GM12878 (cell line): ENCODE measurements at regions of chr18 and their contacts with region 1.

Region 1: DNA sequence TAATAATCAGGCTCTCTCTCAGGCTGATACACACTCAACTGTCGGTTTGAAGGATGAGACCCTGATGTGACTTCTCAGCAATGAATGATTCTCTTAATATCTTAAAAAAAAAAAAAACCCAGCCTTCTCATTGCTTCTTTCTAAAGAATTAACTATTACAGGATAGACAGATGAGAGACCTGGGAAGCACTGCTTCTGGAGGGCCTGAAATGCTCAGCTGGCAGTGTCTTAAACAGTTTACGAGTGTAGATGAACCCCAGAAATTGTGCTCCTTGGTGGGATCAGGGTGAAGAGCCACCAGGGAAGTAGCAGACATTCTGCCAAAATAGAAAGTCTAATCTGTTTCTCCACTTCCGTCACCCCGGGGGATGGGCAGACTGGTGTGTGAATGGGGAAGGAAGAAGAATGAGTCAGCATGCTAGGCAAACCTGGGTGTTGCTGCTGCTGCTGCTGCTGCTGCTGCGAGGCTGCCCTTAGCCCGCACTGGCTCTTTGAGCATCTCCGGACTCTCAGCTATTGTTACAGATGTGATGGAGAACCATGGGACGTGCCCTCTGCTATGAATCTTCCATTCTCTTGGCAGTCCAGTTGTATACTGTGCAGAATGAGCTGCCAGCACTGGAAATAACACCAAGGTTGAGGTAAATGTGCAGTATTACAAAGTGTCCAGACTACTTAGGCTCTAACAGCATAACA is 158.4 kb downstream of the SETBP1 start:
- DNase-seq: peak; percentile 64
- ATAC-seq: peak; percentile 96
- H3K4me3 ChIP-seq: peak overlapping the region; percentile 18; the same call in 1 of the 2 replicates
- H3K27ac ChIP-seq: peak overlapping the region; percentile 40
- H3K4me1 ChIP-seq: peaks cover 23% of the 10 kb centered on the region
- H3K27me3 ChIP-seq: no peaks in the 10 kb centered on the region
- CTCF ChIP-seq: no peak
- EP300 ChIP-seq: 0 out of 4 replicates have a peak, but pooled peaks of 1 of the 2 experiments have one; percentile 44
- POLR2A ChIP-seq: no peak
- RAD21 ChIP-seq: no peak

Region 2: DNA sequence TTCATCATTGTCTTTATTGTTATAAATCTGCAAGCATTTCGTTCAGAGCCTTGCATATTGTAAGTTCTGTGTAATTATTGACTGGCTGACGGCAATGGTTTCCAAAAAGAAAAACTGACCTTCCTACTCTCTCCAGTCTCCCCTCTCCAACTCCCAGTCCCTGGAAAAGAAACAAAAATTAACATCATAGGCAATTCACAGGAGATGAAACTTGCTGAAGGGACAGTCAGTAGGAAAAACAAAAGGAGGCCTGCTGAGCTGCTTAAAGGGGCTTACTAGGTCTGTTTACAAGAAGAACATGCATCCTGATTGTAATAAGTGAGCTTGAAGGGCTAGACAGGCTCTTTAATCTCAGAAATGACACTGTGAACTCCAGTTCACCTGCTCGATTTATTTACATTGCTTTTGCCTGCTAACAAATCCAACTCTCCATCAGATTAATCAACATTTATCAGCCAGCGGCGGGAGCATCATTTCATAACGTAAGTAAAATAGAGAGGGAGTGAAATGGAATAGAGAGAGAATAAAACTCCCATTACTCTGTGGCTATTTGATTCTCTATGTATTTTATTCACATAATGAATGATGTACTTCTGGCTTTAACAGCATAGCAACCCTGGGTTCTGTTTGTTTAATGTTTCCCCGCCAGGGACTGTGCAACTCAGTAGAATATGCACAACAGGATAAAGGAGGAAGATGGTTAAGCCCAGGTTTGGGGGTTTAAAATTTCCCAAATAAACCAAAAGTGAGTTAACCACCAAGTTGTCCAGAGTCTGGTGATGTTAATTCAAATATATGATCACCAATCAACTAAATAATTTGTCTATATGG is 415.1 kb before region 1 on chr18:
- CTCF ChIA-PET with region 1: no interaction called
- POLR2A ChIA-PET with region 1: no interaction called
- RAD21 ChIA-PET with region 1: no interaction called
- SMC1A ChIA-PET with region 1: no interaction called
- in situ Hi-C with region 1: no loop called
- intact Hi-C with region 1: no loop called
- DNase-seq: no peak
- ATAC-seq: no peak
- H3K4me3 ChIP-seq: no peak overlapping the region
- H3K27ac ChIP-seq: no peak overlapping the region
- H3K4me1 ChIP-seq: no peaks in the 10 kb centered on the region
- H3K27me3 ChIP-seq: no peaks in the 10 kb centered on the region
- CTCF ChIP-seq: no peak
- EP300 ChIP-seq: no peak
- POLR2A ChIP-seq: no peak
- RAD21 ChIP-seq: no peak

Region 3: GRCh38 chr18:44786688-44787087 is 52.4 kb before region 1 on chr18:
- CTCF ChIA-PET with region 1: no interaction called
- POLR2A ChIA-PET with region 1: no interaction called
- RAD21 ChIA-PET with region 1: interaction called, 3 read pairs
- SMC1A ChIA-PET with region 1: interaction called, 3 read pairs
- in situ Hi-C with region 1: no loop called
- intact Hi-C with region 1: loop called (anchors 5 kb)
- DNase-seq: no peak
- ATAC-seq: peak; percentile 85
- H3K4me3 ChIP-seq: peak overlapping the region; percentile 41; the same call in 1 of the 2 replicates
- H3K27ac ChIP-seq: peak overlapping the region; percentile 64
- H3K4me1 ChIP-seq: peaks cover 20% of the 10 kb centered on the region
- H3K27me3 ChIP-seq: no peaks in the 10 kb centered on the region
- CTCF ChIP-seq: no peak
- EP300 ChIP-seq: no peak
- POLR2A ChIP-seq: no peak
- RAD21 ChIP-seq: no peak

Region 4: DNA sequence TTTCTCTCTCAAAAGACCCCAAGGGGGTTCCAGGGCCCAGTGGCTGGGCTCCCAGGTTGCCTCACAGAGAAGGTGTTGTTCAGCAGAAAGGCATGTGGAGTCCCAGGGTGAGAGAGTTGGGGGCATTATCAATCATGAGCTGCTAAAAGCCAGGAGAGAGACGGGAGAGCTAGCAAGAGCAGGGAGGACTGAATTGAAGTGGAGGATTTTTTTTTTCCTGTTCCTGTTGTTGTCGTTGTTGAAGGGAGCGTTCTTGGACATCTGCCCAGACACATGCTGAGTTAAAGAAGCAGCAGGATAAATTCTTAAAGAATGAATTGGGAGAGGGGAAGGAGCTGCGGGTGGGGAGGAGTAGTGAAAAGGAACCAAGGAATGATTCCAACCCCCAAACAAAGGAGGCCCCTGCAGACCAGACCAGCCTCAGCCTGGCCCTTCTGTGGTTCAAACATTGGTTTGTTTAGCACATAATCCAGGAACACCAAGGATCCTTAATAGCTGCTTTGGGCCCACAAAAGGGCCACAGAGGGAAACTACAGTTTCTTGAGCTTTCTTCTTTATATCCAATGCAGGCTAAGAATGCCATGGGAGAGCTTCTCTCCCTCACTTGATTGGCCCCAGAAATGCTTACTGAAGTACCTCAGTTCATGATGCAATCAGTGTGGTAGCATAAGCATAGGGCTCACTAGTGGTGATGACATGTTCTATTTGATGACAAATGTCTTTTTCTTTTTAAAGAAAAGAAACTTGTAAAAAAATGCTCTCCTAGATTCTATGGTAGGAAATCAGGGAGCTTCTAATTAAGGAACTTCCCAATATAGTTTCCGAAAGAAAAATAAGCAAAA is 12.5 kb before region 1 on chr18:
- CTCF ChIA-PET with region 1: interaction called, 6 read pairs
- POLR2A ChIA-PET with region 1: interaction called, 3 read pairs
- RAD21 ChIA-PET with region 1: interaction called, 3 read pairs
- SMC1A ChIA-PET with region 1: interaction called, 33 read pairs
- in situ Hi-C with region 1: no loop called
- intact Hi-C with region 1: no loop called
- DNase-seq: no peak
- ATAC-seq: no peak
- H3K4me3 ChIP-seq: no peak overlapping the region
- H3K27ac ChIP-seq: no peak overlapping the region
- H3K4me1 ChIP-seq: no peaks in the 10 kb centered on the region
- H3K27me3 ChIP-seq: no peaks in the 10 kb centered on the region
- CTCF ChIP-seq: no peak
- EP300 ChIP-seq: no peak
- POLR2A ChIP-seq: no peak
- RAD21 ChIP-seq: no peak

Region 5: DNA sequence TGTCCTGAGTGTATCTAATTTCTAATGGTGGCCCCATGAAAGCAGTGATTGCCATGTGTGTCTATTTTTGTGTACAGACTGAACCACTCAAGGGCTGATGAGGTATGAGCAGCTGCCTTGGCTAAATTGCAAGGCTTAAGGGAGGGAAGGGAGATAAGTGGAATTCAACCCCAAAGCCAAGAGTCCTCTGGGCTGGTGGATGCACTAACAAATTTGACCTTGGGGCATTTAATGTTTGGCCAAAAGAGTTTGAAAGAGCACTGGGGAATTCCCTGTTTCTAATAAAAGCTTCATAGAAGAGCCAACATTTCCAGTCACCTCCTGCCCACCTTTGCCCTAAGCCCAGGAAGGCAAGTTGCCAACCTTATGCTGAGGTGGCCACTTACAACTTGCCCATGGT is 13.7 kb after region 1 on chr18:
- CTCF ChIA-PET with region 1: interaction called, 9 read pairs
- POLR2A ChIA-PET with region 1: interaction called, 5 read pairs
- RAD21 ChIA-PET with region 1: interaction called, 16 read pairs
- SMC1A ChIA-PET with region 1: interaction called, 28 read pairs
- in situ Hi-C with region 1: no loop called
- intact Hi-C with region 1: no loop called
- DNase-seq: no peak
- ATAC-seq: peak; percentile 44
- H3K4me3 ChIP-seq: no peak overlapping the region
- H3K27ac ChIP-seq: no peak overlapping the region
- H3K4me1 ChIP-seq: peaks cover 7% of the 10 kb centered on the region; the same call in 1 of the 2 replicates
- H3K27me3 ChIP-seq: no peaks in the 10 kb centered on the region
- CTCF ChIP-seq: no peak
- EP300 ChIP-seq: no peak
- POLR2A ChIP-seq: no peak
- RAD21 ChIP-seq: no peak